Heart right ventricle (tissue), 16 donors: ENCODE measurements at regions of chrX and their contacts with region 1.

Region 1: DNA sequence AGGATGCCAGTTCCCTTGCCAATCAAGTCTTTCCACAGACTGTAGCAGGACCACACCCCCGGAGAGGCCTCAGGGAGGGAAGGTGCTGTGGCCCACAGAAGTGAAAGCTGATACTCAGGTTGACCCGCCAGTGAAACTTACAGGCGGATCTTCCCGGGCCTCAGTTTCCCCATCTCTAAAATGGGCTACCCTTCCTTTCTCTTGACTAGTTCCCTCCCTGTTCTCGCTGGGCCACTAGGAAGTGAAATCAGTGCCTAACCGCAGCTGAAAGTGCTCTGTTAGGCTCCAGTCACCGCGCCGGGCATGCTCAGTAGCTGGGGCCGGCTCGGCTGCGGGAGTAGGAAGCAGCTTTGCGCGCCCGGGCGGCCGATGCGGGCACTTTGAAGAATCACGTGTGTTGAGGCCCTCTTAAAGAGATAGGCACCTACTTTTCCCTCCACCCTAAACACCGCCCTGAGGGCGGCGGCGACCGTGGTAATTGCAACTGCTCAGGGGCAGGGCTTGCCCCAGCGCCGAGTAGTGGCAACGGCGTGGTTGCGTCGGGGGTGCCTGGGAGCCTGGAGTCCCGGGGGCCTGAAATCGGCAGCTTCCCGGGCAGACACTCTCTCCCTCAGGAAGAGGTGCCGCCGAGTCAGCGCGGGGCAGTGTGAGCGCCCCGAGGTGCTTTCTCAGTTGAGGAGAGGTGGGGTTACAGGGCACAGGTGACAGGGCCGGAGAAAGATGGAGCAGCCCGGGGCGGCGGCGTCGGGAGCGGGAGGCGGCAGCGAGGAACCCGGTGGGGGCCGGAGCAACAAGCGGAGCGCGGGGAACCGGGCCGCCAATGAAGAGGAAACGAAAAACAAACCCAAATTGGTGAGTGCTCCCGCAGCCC is at the start of gene DIAPH2:
- DNase-seq: peak; percentile 60 to 79
- ATAC-seq: peak; percentile 89 to 96 (median 94)
- H3K4me3 ChIP-seq: peak within 1 kb of the TSS; percentile 64 to 83 (median 77)
- H3K27ac ChIP-seq: peak within 1 kb of the TSS; percentile 58 to 90 (median 83)
- H3K4me1 ChIP-seq: peaks cover 0 to 19% (median 0%) of the 10 kb centered on the region in 9 donors
- H3K27me3 ChIP-seq: peaks cover 0 to 43% (median 0%) of the 10 kb centered on the region in 7 donors
- CTCF ChIP-seq: peak in 3 of 9 donors; percentile 22 to 31 (median 22)
- total RNA-seq, gene DIAPH2: 7.2 to 13.6 (median 10.7) TPM

Region 2: GRCh38 chrX:96372313-96373046 is 312.1 kb before region 1 on chrX:
- intact Hi-C with region 1: loop called in 1 of 10 experiments (anchors 10 kb)
- DNase-seq: no peak
- ATAC-seq: no peak
- H3K4me3 ChIP-seq: peak overlapping the region in 2 of 10 donors; percentile 26 to 29
- H3K27ac ChIP-seq: no peak overlapping the region
- H3K4me1 ChIP-seq: no peaks in the 10 kb centered on the region
- H3K27me3 ChIP-seq: peaks cover 0 to 3% (median 0%) of the 10 kb centered on the region in 7 donors
- CTCF ChIP-seq: peak; percentile 42 to 75 (median 61)